AG04449 (cell line): ENCODE measurements at regions of chr2 and their contacts with region 1.

Region 1: GRCh38 chr2:219498280-219499057 is at the start of gene GMPPA:
- DNase-seq: peak; percentile 95
- H3K4me3 ChIP-seq: peak within 1 kb of the TSS; percentile 75
- CTCF ChIP-seq: peak; percentile 9

Region 2: GRCh38 chr2:219352448-219353023 is 145.9 kb before region 1 on chr2:
- CTCF ChIA-PET with region 1: no interaction called
- POLR2A ChIA-PET with region 1: no interaction called
- DNase-seq: no peak
- H3K4me3 ChIP-seq: no peak overlapping the region
- CTCF ChIP-seq: peak; percentile 62

Region 3: DNA sequence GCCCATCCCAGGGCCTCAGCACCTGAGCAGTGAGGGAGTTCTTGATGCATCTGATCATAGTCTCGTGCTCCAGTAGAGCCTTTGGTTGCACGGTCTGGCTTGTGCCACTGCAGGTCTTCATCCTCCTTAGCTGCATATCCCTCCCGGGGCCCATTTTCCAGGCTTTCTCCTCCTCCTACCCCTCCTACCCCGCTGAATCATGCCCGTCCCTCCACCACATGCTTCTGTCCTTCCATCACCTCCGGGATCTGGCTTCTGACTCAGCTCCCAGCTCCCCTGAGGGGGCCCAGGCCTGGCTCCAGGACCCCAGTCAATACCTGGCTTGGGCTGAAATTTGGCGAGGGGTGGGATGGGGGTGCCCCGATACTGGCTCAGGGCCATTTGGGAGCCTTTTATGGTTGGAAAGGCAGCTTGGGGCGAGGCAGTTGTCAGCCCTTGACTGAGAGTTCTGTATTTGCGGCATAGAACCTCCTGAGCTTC is 45.6 kb before region 1 on chr2:
- CTCF ChIA-PET with region 1: interaction called, 15 read pairs
- POLR2A ChIA-PET with region 1: interaction called, 22 read pairs
- DNase-seq: peak; percentile 87
- H3K4me3 ChIP-seq: no peak overlapping the region
- CTCF ChIP-seq: no peak

Region 4: DNA sequence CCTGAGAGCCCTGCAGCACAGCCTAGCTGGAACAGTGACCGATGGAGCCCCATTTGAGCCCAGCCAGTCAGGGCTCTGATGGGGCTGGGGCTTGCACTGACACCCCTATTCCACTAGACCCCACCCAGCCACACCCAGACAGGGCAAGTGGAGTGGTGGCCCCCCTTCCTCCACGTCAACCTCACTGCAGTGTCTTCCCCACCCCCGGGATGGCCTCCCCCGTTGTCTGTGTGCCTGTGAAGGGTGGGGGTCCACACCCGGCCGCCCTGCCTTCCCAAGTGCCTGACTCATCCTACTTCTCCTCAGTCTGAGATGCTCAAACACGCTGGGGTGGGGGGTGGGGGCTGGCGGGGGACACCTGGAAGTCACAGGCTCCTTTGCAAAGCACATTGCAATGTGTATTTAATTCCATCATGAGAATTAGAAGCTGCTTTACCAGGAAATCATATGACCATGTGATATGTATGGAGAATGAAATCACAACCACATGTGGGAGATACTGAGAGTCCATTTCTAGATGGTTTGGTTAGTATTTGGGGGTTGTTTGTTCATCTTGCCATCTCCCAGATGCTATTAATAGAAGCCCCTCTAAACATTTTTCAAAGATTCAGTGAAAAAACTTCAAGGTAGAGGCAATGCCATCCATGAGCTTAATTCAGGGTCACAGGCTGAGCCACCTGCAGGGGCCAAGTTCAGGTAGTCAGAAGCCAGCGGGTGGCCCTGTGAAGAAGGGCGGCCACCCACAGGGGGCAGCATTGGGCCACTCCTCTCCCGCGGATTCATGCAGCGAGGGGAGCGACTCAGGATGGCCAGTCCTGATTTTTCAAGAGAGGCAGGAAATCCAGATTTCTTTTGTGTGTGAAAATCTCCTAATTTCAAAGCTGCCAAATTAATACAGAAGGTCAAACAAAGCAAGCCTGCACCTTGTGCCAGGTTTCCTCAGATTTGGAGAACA is 22.5 kb before region 1 on chr2:
- CTCF ChIA-PET with region 1: interaction called, 513 read pairs
- POLR2A ChIA-PET with region 1: no interaction called
- DNase-seq: no peak
- H3K4me3 ChIP-seq: no peak overlapping the region
- CTCF ChIP-seq: peak; percentile 86

Region 5: DNA sequence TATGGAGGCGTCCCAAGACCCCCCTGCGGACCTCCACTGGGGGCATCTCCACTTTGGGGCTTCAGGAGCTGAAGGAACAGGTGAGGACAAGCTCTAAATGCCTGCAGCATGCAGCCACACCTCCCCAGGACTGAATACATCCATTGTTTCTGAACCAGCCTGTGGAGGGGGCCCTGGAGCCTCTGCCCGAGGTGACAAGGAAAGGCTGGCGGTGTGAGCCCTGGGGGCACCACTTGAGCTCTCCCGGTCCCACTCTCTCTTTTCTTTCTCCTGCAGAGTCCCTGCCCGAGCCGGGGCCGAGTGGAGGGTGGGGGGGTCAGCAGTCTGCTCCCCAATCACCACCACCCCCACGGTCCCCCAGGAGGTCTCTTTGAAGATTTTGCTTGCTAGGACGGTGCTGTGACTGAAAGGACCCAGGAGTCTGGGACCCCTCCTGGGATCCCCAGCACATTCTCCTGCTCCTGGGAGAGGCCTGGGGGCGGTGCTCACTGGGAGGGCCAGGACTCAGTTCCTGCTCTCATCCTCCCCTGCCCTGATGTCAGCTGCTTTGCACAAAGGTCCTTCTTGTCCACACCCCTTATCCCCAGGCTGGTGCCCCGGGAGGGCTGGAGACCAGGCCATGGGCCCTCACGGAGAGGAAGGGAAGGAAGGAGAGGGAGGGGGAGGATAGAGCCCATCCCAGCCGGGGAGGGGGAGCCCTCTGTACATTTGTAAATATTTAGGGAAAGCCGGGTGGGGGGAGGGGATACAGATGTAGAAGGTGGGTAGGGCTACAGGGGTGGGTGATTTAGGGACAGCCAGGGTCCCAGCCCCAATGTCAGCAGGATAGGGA is 39.4 kb after region 1 on chr2:
- CTCF ChIA-PET with region 1: interaction called, 1,084 read pairs
- POLR2A ChIA-PET with region 1: interaction called, 7 read pairs
- DNase-seq: no peak
- H3K4me3 ChIP-seq: no peak overlapping the region
- CTCF ChIP-seq: no peak